PC-9 (cell line): ENCODE measurements at regions of chr15 and their contacts with region 1.

Region 1: DNA sequence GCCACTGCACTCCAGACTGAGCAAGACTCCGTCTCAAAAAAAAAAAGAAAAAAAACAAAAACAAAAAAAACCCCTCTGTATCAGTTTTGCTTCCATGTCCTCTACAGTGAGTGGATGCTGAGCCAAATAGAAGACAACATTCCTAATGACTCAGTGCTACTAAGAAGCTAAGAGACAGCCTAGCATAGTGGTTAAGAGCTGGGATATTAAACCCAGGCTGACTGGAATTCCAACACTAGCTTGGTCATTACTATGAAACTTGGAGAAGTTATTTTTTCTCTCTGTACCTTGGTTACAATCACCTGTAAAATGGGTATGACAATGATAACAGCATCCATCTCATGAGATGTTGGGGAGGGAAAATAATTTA is 60.9 kb upstream of the PYGO1 start:
- DNase-seq: no peak
- H3K4me3 ChIP-seq: no peak overlapping the region
- H3K27ac ChIP-seq: no peak overlapping the region
- H3K4me1 ChIP-seq: no peaks in the 10 kb centered on the region
- H3K27me3 ChIP-seq: no peaks in the 10 kb centered on the region
- CTCF ChIP-seq: no peak

Region 2: DNA sequence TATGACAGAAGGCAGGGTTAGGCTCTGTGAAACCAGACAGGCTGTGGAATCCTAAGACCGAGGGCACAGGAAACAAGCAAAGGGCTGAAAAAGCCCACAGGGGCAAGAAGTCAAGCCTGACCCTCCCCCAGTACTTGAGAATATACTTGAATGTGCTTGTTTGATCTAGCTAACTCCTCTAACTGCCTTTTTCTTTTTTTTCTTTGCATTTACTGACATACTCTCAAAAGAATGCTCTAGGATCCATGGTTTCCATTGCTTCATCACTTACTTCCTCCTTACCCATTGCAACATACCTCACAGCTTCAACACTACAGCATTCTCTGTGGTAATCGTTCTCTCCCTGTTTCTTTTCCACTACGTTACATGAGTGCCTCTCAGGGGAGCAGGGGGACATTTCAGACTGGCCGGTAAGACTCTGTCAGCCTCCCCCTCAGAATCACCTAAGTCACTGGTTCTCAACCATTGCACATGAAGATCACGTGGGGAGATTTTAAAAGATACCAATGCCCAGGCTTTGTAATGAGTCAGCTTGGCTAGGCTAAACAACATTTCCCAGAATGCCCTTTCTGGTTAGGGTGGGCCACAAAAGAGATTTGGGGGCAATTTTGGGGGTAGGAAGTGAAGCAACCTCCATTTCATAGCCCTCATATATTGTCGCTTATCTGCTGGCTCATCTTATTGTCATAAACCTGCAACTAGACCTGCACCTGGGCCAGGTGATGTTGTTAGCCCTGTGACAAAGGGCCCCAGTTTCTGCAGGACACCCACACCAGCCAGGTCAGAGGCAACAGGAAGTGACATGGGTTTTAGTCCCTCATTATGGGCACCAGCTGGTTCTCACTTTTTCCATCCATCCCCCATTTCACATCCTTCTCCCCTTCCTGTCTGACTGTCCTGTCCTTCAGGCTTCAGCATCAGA is 427.7 kb before region 1 on chr15:
- CTCF ChIA-PET with region 1: no interaction called
- POLR2A ChIA-PET with region 1: no interaction called
- intact Hi-C with region 1: loop called (anchors 2 kb)
- DNase-seq: peak; percentile 33 to 92
- H3K4me3 ChIP-seq: peak overlapping the region; percentile 31; the same call in 1 of the 2 replicates
- H3K27ac ChIP-seq: peak overlapping the region; percentile 84
- H3K4me1 ChIP-seq: peaks cover 23% of the 10 kb centered on the region
- H3K27me3 ChIP-seq: no peaks in the 10 kb centered on the region
- CTCF ChIP-seq: no peak

Region 3: GRCh38 chr15:55799291-55800212 is 150.5 kb after region 1 on chr15:
- CTCF ChIA-PET with region 1: interaction called, 4 read pairs
- POLR2A ChIA-PET with region 1: no interaction called
- intact Hi-C with region 1: loop called (anchors 1 kb)
- DNase-seq: peak in 1 of 2 experiments; percentile 57
- H3K4me3 ChIP-seq: no peak overlapping the region
- H3K27ac ChIP-seq: no peak overlapping the region
- H3K4me1 ChIP-seq: peaks cover 16% of the 10 kb centered on the region
- H3K27me3 ChIP-seq: no peaks in the 10 kb centered on the region
- CTCF ChIP-seq: peak; percentile 69

Region 4: GRCh38 chr15:55846116-55846707 is 197.2 kb after region 1 on chr15:
- CTCF ChIA-PET with region 1: interaction called, 7 read pairs
- POLR2A ChIA-PET with region 1: no interaction called
- intact Hi-C with region 1: loop called (anchors 1 kb)
- DNase-seq: peak; percentile 32 to 41
- H3K4me3 ChIP-seq: no peak overlapping the region
- H3K27ac ChIP-seq: no peak overlapping the region
- H3K4me1 ChIP-seq: no peaks in the 10 kb centered on the region
- H3K27me3 ChIP-seq: no peaks in the 10 kb centered on the region
- CTCF ChIP-seq: peak; percentile 91

Region 5: GRCh38 chr15:55917881-55918296 is 268.9 kb after region 1 on chr15:
- CTCF ChIA-PET with region 1: no interaction called
- POLR2A ChIA-PET with region 1: no interaction called
- intact Hi-C with region 1: loop called (anchors 1 kb)
- DNase-seq: peak; percentile 23 to 84
- H3K4me3 ChIP-seq: no peak overlapping the region
- H3K27ac ChIP-seq: peak overlapping the region; percentile 58
- H3K4me1 ChIP-seq: peaks cover 9% of the 10 kb centered on the region
- H3K27me3 ChIP-seq: no peaks in the 10 kb centered on the region
- CTCF ChIP-seq: peak; percentile 68

Region 6: DNA sequence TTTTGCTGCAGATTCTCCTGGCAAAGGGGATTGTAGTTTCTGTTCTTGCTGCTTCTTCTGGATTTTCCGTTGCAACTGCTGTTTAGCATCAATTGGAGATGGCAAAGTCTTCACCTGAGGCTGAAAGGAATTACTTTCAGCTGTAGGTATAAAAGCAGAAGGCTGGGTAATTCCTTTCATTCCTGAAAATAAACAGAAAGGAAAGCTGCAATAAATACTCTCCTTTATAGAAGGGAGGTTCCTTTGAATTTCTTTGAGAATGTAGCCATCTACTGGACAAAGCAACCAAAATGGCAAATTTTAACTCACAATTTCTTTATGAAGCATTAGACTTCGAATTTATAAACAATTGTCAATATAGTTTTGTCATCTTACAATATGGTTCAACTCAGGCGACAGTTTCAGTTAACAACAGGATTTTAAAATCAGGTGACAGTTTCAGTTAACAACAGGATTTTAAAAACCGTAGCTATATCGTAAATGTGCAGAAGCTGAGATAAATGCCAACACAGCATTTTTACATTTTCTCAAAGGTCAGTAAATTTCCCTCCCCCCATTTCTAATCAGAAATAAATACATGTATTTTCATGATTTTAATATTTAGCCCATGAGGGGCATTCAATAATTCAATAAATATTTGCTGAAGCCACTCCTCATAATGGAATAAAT is 449.3 kb after region 1 on chr15:
- CTCF ChIA-PET with region 1: no interaction called
- POLR2A ChIA-PET with region 1: no interaction called
- intact Hi-C with region 1: loop called (anchors 1 kb)
- DNase-seq: no peak
- H3K4me3 ChIP-seq: no peak overlapping the region
- H3K27ac ChIP-seq: no peak overlapping the region
- H3K4me1 ChIP-seq: no peaks in the 10 kb centered on the region
- H3K27me3 ChIP-seq: no peaks in the 10 kb centered on the region
- CTCF ChIP-seq: peak; percentile 35; the same call in 1 of the 2 replicates

Region 7: DNA sequence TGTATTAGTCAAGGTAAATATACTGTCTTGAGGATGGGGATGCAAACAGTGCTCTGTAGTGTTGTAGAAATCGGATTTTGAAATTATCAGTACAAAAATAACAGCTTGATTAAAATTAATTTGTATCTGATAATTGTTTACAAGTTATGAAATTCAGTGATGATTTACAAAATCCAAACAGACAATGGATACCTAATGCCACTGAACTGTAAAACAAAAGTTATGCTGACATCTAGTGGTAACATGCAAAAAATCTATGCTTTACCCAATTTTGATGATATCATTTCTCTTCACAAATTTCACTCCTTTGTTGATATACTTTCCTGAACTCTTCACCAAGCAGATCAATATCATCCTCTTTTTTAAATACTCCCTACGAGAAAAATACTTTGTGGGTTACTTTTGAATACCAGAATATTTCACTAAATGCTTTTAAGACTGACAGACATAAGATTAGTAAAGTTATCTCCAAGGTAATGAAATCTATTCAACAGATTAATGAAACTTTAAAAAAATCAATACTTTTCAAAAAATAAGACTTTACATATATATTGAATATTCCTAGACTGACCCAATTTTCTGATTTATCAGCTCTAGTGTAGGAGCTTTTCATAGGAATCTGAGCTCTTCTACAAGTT is 779.9 kb after region 1 on chr15:
- CTCF ChIA-PET with region 1: no interaction called
- POLR2A ChIA-PET with region 1: no interaction called
- intact Hi-C with region 1: loop called (anchors 10 kb)
- DNase-seq: no peak
- H3K4me3 ChIP-seq: no peak overlapping the region
- H3K27ac ChIP-seq: no peak overlapping the region
- H3K4me1 ChIP-seq: no peaks in the 10 kb centered on the region
- H3K27me3 ChIP-seq: no peaks in the 10 kb centered on the region
- CTCF ChIP-seq: peak; percentile 65